Vagina (tissue), 2 donors: ENCODE measurements at regions of chr1 and their contacts with region 1.

Region 1: DNA sequence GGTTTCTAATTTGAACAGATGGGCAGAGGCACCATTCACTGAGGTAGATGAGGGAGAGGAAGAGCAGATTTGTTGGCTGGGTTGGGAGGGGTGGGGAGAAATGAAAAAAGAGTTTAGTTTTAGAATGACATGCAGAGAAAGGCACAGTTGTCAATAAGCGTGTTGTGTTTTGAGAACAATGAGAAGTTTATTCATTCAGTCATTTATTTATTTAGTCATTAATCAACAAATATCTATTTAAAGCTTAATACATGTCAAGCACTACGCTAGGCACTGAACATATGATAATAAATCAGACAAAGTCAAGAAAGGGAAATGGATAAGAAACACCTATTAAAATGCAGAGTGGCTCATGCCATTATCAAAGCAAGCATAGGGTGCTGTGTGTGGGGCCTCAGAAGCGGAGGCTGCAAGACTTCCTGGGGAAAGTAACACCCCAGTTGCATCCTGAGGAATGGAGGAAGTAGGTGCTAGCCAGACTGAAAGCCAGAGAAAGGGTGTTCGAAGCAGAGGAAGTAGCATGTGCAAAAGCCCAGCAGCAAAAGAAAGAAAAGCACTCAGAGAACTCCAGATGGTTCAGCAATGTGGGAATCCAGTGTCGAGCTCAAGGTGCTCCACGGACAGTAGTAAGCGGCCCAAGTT is 114.1 kb downstream of the RNF220 start:
- DNase-seq: no peak
- H3K4me3 ChIP-seq: no peak overlapping the region
- H3K27ac ChIP-seq: no peak overlapping the region
- H3K4me1 ChIP-seq: peaks cover 2% of the 10 kb centered on the region
- H3K27me3 ChIP-seq: no peaks in the 10 kb centered on the region
- CTCF ChIP-seq: no peak
- POLR2A ChIP-seq: no peak

Region 2: GRCh38 chr1:43143441-43143888 is 1375.7 kb before region 1 on chr1:
- intact Hi-C with region 1: loop called (anchors 5 kb)
- DNase-seq: no peak
- H3K4me3 ChIP-seq: no peak overlapping the region
- H3K27ac ChIP-seq: no peak overlapping the region
- H3K4me1 ChIP-seq: peaks cover 12% of the 10 kb centered on the region
- H3K27me3 ChIP-seq: no peaks in the 10 kb centered on the region
- CTCF ChIP-seq: no peak
- POLR2A ChIP-seq: no peak